Caco-2 (cell line): ENCODE measurements at regions of chr12 and their contacts with region 1.

Region 1: GRCh38 chr12:54005853-54006686 is 2.7 kb upstream of the HOXC8 start:
- DNase-seq: peak; percentile 82 to 92
- H3K4me3 ChIP-seq: peak overlapping the region; percentile 53
- H3K4me3 Mint-ChIP-seq: peak overlapping the region; percentile 87
- H3K27ac Mint-ChIP-seq: peak overlapping the region; percentile 58
- H3K4me1 ChIP-seq: peaks cover 41% of the 10 kb centered on the region
- H3K4me1 Mint-ChIP-seq: peaks cover 10% of the 10 kb centered on the region
- H3K27me3 ChIP-seq: no peaks in the 10 kb centered on the region
- H3K27me3 Mint-ChIP-seq: no peaks in the 10 kb centered on the region
- CTCF ChIP-seq: peak; percentile 85 to 90

Region 2: DNA sequence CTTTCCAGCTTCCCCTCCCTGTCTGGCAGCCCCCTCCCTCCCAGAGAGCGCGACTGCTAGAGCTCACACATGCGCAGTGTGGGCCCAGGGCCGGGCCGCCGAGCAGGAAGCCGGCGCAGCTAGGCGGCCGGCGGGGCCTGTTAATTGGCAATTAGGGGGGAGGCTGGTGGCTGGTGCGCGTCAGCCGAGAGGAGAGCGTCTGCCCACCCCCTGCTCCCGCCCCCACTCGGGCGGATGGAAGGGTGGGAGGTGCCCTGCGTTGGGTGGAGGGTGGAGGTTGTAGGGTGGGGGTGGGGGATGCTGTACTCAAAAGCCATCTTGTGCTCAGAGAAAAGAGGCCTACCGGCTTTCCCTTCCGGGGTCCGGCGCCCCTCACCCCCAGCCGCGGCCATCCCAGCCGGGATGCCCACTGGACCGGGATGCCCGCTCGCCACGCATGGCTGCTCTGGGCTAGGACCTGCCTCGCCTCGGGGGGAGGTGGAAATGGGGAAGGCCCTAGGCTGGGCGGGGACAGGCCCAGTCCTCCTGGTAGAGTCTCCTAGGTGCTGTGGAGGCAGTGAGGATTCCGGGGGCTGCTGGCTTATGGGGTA is 11.9 kb after region 1 on chr12:
- CTCF ChIA-PET with region 1: interaction called, 84 read pairs
- POLR2A ChIA-PET with region 1: interaction called, 25 read pairs
- intact Hi-C with region 1: no loop called
- DNase-seq: peak; percentile 87
- H3K4me3 ChIP-seq: peak overlapping the region; percentile 58
- H3K4me3 Mint-ChIP-seq: peak overlapping the region; percentile 98
- H3K27ac Mint-ChIP-seq: peak overlapping the region; percentile 83
- H3K4me1 ChIP-seq: peaks cover 30% of the 10 kb centered on the region
- H3K4me1 Mint-ChIP-seq: peaks cover 27% of the 10 kb centered on the region
- H3K27me3 ChIP-seq: no peaks in the 10 kb centered on the region
- H3K27me3 Mint-ChIP-seq: no peaks in the 10 kb centered on the region
- CTCF ChIP-seq: no peak

Region 3: DNA sequence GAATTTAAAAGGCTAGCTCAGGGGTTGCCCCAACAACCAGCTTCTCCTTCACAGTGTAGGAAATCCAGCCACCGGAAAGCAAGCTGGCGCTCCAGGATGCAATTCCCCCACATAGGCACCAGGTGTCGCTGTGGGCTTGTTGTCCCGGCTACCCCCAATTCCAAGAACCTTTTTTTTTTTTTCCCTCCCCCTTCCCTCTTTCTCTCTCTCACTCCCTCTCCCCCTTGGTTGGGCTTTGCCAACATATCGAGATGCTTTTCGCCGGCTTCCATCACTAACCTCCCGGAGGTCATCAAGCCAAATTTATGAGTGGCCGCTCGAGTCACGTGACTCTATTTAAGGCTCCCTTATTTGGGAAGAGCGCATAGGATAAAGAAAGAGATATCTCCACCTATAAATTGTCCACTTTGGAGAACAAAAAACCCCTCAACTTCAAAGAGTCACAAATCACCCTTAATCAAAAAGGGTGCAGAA is 26.6 kb after region 1 on chr12 and contains the start of gene HOXC5:
- CTCF ChIA-PET with region 1: interaction called, 25 read pairs
- POLR2A ChIA-PET with region 1: interaction called, 7 read pairs
- intact Hi-C with region 1: loop called (anchors 1 kb)
- DNase-seq: peak; percentile 83 to 86
- H3K4me3 ChIP-seq: peak within 1 kb of the TSS; percentile 52
- H3K4me3 Mint-ChIP-seq: peak within 1 kb of the TSS; percentile 89
- H3K27ac Mint-ChIP-seq: peak within 1 kb of the TSS; percentile 90
- H3K4me1 ChIP-seq: peaks cover 9% of the 10 kb centered on the region
- H3K4me1 Mint-ChIP-seq: peaks cover 10% of the 10 kb centered on the region
- H3K27me3 ChIP-seq: no peaks in the 10 kb centered on the region
- H3K27me3 Mint-ChIP-seq: no peaks in the 10 kb centered on the region
- CTCF ChIP-seq: peak; percentile 96 to 97
- total RNA-seq, gene HOXC5: 3.4 and 3.6 TPM in 2 replicates

Region 4: GRCh38 chr12:54134850-54135249 is 128.8 kb after region 1 on chr12:
- CTCF ChIA-PET with region 1: interaction called, 12 read pairs
- POLR2A ChIA-PET with region 1: interaction called, 3 read pairs
- intact Hi-C with region 1: loop called (anchors 1 kb)
- DNase-seq: peak; percentile 57 to 62
- H3K4me3 ChIP-seq: no peak overlapping the region
- H3K4me3 Mint-ChIP-seq: peak overlapping the region; percentile 14
- H3K27ac Mint-ChIP-seq: peak overlapping the region; percentile 71
- H3K4me1 ChIP-seq: peaks cover 80% of the 10 kb centered on the region
- H3K4me1 Mint-ChIP-seq: peaks cover 36% of the 10 kb centered on the region
- H3K27me3 ChIP-seq: no peaks in the 10 kb centered on the region
- H3K27me3 Mint-ChIP-seq: no peaks in the 10 kb centered on the region
- CTCF ChIP-seq: peak; percentile 37 to 57

Region 5: DNA sequence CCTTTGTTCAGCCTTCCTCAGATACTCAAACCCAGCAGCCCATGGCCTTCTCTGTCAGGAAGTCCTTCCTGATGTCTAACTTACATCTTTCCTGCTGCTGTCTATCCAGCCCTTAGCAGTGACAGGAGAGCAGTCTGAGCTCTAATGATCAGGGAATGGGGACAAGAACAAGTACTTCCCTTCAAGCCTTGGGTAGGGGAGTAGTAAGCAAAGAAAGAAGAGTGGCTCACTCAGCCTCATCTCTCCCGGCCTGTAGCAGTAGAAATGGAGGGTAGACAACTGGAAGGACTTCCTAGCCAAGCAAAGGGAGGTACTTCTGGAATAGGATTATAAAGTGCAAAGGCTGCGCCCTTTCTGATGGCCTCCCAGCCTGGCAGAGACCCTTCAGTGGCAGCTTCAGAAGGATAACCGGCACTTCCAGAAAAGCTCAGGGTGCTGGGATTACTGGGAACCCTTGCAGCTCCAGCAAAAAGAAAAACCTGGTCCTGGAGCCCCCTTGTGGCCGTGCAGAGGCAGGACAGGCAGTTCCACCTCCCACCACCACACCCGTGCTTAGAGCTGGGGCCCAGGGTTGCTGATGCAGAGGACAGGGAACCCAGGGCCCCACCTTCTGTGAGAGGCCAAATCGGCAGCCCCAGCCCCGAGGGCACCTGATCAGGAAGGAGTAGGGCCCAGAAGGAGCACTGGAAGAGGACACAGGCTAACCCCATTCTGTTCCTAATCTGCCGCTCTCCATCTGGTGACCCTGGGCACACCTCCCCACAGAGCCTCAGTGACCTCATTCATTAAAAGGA is 195.1 kb after region 1 on chr12:
- CTCF ChIA-PET with region 1: interaction called, 80 read pairs
- POLR2A ChIA-PET with region 1: interaction called, 6 read pairs
- intact Hi-C with region 1: loop called (anchors 1 kb)
- DNase-seq: peak; percentile 84 to 90
- H3K4me3 ChIP-seq: no peak overlapping the region
- H3K4me3 Mint-ChIP-seq: no peak overlapping the region
- H3K27ac Mint-ChIP-seq: no peak overlapping the region
- H3K4me1 ChIP-seq: no peaks in the 10 kb centered on the region
- H3K4me1 Mint-ChIP-seq: peaks cover 8% of the 10 kb centered on the region
- H3K27me3 ChIP-seq: no peaks in the 10 kb centered on the region
- H3K27me3 Mint-ChIP-seq: no peaks in the 10 kb centered on the region
- CTCF ChIP-seq: peak; percentile 93 to 97

Region 6: GRCh38 chr12:54214553-54215406 is 208.7 kb after region 1 on chr12:
- CTCF ChIA-PET with region 1: interaction called, 6 read pairs
- POLR2A ChIA-PET with region 1: no interaction called
- intact Hi-C with region 1: loop called (anchors 1 kb)
- DNase-seq: peak; percentile 89 to 92
- H3K4me3 ChIP-seq: 0 out of 2 replicates have a peak overlapping the region, but pooled peaks have one; percentile 5
- H3K4me3 Mint-ChIP-seq: peak overlapping the region; percentile 42
- H3K27ac Mint-ChIP-seq: no peak overlapping the region
- H3K4me1 ChIP-seq: no peaks in the 10 kb centered on the region
- H3K4me1 Mint-ChIP-seq: no peaks in the 10 kb centered on the region
- H3K27me3 ChIP-seq: no peaks in the 10 kb centered on the region
- H3K27me3 Mint-ChIP-seq: no peaks in the 10 kb centered on the region
- CTCF ChIP-seq: peak; percentile 97 to 98

Region 7: DNA sequence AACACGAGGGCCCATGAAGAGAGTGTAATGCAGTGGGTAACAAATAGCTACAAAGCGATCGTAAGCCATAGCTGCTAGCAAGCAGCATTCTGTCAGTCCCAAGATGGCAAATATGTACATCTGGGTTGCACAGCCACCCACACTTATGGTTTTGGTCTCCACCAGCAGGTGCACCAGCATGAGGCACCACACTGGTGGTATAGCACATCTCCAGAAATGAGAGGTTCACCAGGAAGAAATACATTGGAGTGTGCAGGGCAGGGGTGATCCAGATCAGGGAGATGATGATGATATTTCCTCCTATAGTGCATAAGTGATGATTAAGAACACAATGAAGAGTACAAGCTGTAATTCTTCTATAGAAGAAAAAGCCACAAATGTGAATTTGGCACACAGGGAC is 1188.3 kb after region 1 on chr12:
- CTCF ChIA-PET with region 1: no interaction called
- POLR2A ChIA-PET with region 1: no interaction called
- intact Hi-C with region 1: no loop called
- DNase-seq: no peak
- H3K4me3 ChIP-seq: no peak overlapping the region
- H3K4me3 Mint-ChIP-seq: no peak overlapping the region
- H3K27ac Mint-ChIP-seq: no peak overlapping the region
- H3K4me1 ChIP-seq: no peaks in the 10 kb centered on the region
- H3K4me1 Mint-ChIP-seq: peaks cover 12% of the 10 kb centered on the region
- H3K27me3 ChIP-seq: no peaks in the 10 kb centered on the region
- H3K27me3 Mint-ChIP-seq: no peaks in the 10 kb centered on the region
- CTCF ChIP-seq: no peak